Right cardiac atrium (tissue), 5 donors: ENCODE measurements at regions of chr17 and their contacts with region 1.

Region 1: DNA sequence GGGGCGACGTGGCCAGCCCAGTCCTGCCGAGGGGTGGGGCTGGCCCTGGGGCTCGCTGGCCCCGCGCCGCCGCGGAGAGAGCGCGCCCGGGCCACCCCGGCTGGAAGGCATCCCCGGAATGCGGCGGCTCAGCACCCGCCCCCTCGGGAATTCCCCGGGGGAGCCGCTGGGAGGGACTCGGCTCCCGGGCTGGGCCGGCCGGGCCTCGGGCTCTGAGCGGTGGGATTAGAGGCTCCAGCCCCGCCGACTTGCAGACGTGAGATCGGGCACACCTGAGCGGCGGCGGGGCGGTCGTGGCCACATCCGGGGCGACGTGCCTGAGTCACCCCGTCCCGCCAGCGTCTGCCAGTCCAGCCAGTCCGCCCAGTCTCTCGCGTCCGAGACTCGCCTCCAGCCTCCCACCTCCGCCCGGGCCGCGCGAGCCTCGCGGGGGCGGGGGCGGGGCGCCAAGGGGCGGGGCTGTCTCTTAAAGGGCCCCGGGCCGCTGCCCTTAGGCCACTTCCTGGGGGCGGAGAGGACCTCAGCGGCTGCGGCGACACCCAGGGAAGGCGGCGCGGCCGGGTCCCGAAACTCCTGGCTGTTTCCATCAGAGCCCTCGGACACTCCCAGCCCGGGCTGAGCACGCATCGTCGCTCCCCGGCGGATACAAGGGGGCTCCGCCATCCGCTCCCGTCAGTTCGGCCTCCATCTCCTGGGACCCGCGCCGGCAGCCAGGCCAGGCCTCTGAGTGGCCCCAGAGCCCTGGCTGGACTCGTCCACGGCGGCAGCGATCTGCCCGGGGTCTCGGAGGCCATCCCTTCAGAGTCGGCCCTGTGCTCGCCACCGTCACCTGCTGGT is at the start of gene KCTD11:
- DNase-seq: peak; percentile 95 to 98 (median 97)
- ATAC-seq: peak; percentile 81 to 83
- H3K4me3 ChIP-seq: peak within 1 kb of the TSS; percentile 64
- H3K27ac ChIP-seq: peak within 1 kb of the TSS; percentile 87
- H3K4me1 ChIP-seq: peaks cover 8% of the 10 kb centered on the region
- H3K27me3 ChIP-seq: no peaks in the 10 kb centered on the region
- total RNA-seq, gene KCTD11: 4.7 to 6.7 (median 6.5) TPM

Region 2: DNA sequence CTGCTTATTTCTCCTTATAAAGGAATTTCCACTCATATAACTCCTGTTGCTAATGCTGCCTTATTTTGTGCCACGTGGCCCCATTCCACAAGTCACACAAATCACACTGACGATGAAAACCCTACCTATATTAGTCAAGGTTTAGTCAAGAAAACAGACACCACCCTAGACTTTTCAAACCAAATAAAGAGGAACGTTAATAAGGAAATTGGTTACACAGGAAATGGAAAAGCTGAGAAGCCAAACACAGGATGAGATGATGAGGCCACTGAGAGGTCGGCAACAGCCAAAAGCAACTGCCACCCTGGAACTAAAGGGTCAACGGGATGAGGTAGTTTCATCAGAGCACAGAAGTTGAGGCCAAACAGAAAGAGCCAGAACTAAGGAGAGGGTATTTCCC is 403.3 kb before region 1 on chr17:
- intact Hi-C with region 1: no loop called
- DNase-seq: peak in 1 of 3 donors; percentile 27
- ATAC-seq: peak in 1 of 2 donors; percentile 97
- H3K4me3 ChIP-seq: no peak overlapping the region
- H3K27ac ChIP-seq: no peak overlapping the region
- H3K4me1 ChIP-seq: peaks cover 5% of the 10 kb centered on the region
- H3K27me3 ChIP-seq: no peaks in the 10 kb centered on the region

Region 3: DNA sequence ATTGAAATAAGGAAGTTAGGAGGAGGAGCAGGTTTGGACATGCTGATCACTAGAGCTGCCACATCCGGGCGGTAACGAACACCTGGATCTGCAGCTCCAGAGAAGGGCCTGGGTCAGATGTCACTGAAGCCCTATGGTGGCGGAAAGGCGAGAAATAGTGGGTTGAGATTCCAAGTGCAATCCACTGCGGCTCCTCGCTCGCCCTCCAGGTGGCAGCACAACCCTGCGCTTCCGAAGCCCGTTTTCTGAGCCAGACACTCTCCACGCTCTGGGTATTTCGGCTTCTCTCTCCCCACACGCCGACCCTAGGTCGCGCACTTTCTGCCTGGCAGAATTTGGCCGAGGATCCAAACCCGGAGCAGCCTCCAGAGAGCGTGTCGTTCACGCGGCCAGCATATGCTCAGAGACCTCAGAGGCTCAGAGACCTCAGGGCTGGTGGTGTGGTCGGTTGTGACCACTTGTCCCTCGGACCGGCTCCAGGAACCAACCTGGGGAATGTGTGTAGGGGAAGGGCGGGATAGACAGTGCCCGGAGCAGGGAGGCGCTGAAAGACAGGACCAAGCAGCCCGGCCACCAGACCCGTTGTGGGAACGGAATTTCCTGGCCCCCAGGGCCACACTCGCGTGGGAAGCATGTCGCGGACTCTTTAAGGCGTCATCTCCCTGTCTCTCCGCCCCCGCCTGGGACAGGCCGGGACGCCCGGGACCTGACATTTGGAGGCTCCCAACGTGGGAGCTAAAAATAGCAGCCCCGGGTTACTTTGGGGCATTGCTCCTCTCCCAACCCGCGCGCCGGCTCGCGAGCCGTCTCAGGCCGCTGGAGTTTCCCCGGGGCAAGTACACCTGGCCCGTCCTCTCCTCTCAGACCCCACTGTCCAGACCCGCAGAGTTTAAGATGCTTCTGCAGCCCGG is 71.1 kb before region 1 on chr17:
- intact Hi-C with region 1: loop called in 1 of 4 experiments (anchors 10 kb)
- DNase-seq: peak; percentile 83 to 92 (median 92)
- ATAC-seq: peak; percentile 73 to 77
- H3K4me3 ChIP-seq: peak overlapping the region; percentile 37
- H3K27ac ChIP-seq: peak overlapping the region; percentile 92
- H3K4me1 ChIP-seq: no peaks in the 10 kb centered on the region
- H3K27me3 ChIP-seq: no peaks in the 10 kb centered on the region

Region 4: GRCh38 chr17:7296189-7296902 is 55.5 kb before region 1 on chr17:
- intact Hi-C with region 1: loop called in 1 of 4 experiments (anchors 10 kb)
- DNase-seq: peak; percentile 86 to 95 (median 94)
- ATAC-seq: peak; percentile 83 to 84
- H3K4me3 ChIP-seq: no peak overlapping the region
- H3K27ac ChIP-seq: peak overlapping the region; percentile 71
- H3K4me1 ChIP-seq: peaks cover 12% of the 10 kb centered on the region
- H3K27me3 ChIP-seq: no peaks in the 10 kb centered on the region

Region 5: DNA sequence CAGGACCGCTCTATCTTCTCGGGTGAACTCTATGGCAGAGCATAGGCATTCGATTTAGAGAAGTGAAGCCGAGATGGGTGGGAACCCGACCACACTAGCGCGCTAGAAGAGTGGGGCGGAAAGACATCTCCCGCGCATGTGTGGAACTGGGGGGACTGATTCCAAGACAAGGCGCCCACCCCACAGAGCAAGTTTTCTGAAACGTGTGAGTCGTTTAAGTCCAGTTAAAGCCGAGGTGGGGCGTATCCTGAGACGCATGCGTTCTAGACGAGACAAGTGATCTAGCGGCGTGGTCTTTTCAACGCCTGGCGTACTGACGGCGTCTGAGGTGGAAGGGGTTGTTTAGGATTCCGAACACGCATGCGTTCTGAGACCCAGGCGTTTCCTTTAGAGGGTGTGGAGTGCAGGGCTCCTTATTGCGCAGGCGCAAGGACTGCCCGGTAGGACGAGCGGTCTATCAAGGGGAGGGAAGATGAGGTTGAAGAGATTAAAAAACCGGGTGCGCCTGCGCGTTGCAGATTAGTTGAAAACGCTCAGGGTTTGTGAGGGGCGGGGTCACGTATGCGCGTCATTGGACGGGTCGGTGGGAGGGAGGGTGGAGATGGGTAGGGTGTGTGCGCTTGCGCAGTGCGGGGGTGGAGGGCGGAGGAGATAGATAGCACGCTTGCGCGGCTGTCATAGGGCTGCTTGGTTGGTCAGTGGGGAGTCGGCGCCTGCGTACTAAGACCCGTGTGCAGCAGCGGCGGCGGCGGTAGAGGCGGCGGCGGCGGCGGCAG is 44.8 kb before region 1 on chr17 and contains the start of gene EIF5A:
- intact Hi-C with region 1: no loop called
- DNase-seq: peak; percentile 100
- ATAC-seq: peak; percentile 94 to 96
- H3K4me3 ChIP-seq: peak within 1 kb of the TSS; percentile 83
- H3K27ac ChIP-seq: peak within 1 kb of the TSS; percentile 89
- H3K4me1 ChIP-seq: peaks cover 3% of the 10 kb centered on the region
- H3K27me3 ChIP-seq: no peaks in the 10 kb centered on the region
- total RNA-seq, gene EIF5A: 259 to 311 (median 268) TPM

Region 6: GRCh38 chr17:7394452-7395191 is 42.7 kb after region 1 on chr17 and contains the start of gene PLSCR3:
- intact Hi-C with region 1: no loop called
- DNase-seq: peak; percentile 91 to 97 (median 96)
- ATAC-seq: peak; percentile 93 to 95
- H3K4me3 ChIP-seq: peak within 1 kb of the TSS; percentile 92
- H3K27ac ChIP-seq: peak within 1 kb of the TSS; percentile 98
- H3K4me1 ChIP-seq: no peaks in the 10 kb centered on the region
- H3K27me3 ChIP-seq: no peaks in the 10 kb centered on the region
- total RNA-seq, gene PLSCR3: 19.8 to 25.0 (median 22.9) TPM

Region 7: DNA sequence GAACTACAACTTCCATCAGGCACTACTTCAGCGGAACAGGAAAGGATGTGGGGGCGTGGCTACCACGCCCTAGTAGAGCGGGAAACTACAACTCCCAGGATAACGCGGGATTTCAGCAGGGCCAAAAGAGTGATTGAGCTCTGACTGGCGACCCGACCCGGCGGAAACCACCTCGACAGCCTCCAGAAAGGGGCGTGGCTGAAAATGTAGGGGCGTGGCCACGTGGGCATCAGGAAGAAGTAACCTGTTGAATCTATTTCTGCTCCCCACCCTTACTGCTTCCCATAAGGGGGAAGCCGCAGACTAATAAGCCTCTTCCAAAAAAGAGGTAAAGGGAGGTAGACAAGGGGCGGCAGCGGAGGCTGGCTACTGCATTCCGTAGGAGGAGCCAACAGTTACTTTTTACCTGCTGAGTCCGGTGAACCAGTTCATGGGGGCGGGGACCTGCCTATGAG is 83.4 kb after region 1 on chr17 and contains the start of gene TMEM102:
- intact Hi-C with region 1: loop called in 3 of 4 experiments (anchors 5 to 10 kb)
- DNase-seq: peak; percentile 95 to 98 (median 97)
- ATAC-seq: peak; percentile 85 to 88
- H3K4me3 ChIP-seq: peak within 1 kb of the TSS; percentile 53
- H3K27ac ChIP-seq: peak within 1 kb of the TSS; percentile 5
- H3K4me1 ChIP-seq: no peaks in the 10 kb centered on the region
- H3K27me3 ChIP-seq: no peaks in the 10 kb centered on the region
- total RNA-seq, gene TMEM102: 2.2 to 2.5 (median 2.3) TPM

Region 8: DNA sequence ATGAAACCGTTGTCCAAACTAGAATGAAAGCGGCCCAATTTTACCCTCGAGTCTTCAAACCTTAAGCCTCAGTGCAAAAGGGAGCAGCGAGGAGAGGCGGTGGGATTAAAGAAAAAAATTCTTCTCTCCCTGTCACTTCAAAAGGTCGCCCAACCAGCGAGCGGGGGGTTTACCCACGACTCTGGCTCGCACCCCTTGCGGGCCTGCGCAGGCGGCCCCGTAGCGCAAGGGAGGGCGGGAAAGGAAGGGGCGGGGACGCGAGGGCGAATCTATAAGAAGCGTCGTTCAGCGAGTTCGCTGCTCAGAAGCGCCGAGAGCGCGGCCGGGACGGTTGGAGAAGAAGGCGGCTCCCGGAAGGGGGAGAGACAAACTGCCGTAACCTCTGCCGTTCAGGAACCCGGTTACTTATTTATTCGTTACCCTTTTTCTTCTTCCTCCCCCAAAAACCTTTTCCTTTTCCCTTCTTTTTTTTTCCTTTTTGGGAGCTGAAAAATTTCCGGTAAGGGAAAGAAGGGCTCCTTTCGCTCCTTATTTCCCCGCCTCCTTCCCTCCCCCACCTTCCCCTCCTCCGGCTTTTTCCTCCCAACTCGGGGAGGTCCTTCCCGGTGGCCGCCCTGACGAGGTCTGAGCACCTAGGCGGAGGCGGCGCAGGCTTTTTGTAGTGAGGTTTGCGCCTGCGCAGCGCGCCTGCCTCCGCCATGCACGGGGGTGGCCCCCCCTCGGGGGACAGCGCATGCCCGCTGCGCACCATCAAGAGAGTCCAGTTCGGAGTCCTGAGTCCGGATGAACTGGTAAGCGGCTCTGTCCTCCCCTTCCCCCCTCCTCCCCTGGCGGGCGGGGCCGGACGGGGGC is 132.4 kb after region 1 on chr17 and contains the start of gene POLR2A:
- intact Hi-C with region 1: loop called in 1 of 4 experiments (anchors 5 kb)
- DNase-seq: peak; percentile 99 to 100 (median 100)
- ATAC-seq: peak; percentile 89 to 92
- H3K4me3 ChIP-seq: peak within 1 kb of the TSS; percentile 76
- H3K27ac ChIP-seq: peak within 1 kb of the TSS; percentile 100
- H3K4me1 ChIP-seq: peaks cover 9% of the 10 kb centered on the region
- H3K27me3 ChIP-seq: no peaks in the 10 kb centered on the region
- total RNA-seq, gene POLR2A: 41.9 to 51.4 (median 47.4) TPM

Region 9: GRCh38 chr17:7561028-7561575 is 209.2 kb after region 1 on chr17:
- intact Hi-C with region 1: loop called in 1 of 4 experiments (anchors 10 kb)
- DNase-seq: peak; percentile 92 to 96 (median 96)
- ATAC-seq: peak; percentile 68 to 76
- H3K4me3 ChIP-seq: peak overlapping the region; percentile 78
- H3K27ac ChIP-seq: peak overlapping the region; percentile 87
- H3K4me1 ChIP-seq: peaks cover 8% of the 10 kb centered on the region
- H3K27me3 ChIP-seq: no peaks in the 10 kb centered on the region

Region 10: DNA sequence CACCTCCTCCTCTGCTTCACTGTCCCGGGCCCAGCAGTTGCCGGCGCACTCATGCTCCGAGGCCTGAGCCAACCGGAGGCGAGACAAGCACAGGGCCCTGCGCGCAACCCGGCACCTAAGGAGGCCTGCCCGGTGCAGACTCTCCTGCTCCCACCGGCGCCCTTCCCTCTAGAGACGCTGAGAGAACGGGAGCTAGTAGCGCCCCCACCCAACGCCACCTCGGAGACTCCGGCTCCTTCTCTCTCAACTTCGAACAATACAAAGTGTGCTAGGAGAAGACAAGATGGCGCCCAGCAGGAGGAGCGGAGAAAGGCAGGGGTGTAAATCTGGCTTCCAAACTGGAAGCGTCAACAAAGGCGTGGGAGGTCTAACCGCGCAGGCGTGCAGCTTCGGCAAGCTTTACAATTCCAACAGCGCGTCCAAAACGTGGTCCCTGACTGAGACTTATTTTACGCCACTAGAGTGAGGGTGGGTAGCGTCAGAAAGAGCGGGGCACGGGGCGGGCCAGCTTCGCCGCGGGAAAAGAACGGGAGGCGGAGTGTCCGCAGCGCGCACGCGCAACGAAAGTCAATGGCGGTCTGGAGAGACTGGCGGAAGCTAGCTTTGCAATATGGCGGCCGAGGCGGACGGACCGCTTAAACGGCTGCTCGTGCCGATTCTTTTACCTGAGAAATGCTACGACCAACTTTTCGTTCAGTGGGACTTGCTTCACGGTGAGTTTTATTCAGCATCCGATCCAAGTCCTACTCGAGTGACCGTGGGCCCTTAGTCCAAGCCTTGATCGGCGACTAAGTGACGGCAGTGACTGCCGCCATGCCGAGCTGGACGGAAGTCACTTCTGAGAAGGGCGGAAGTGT is 231.6 kb after region 1 on chr17 and contains the start of gene MPDU1:
- intact Hi-C with region 1: loop called in 1 of 4 experiments (anchors 10 kb)
- DNase-seq: peak; percentile 98 to 99 (median 99)
- ATAC-seq: peak; percentile 82 to 87
- H3K4me3 ChIP-seq: peak within 1 kb of the TSS; percentile 69
- H3K27ac ChIP-seq: peak within 1 kb of the TSS; percentile 88
- H3K4me1 ChIP-seq: peaks cover 19% of the 10 kb centered on the region
- H3K27me3 ChIP-seq: no peaks in the 10 kb centered on the region
- total RNA-seq, gene MPDU1: 19.3 to 32.7 (median 29.4) TPM